ENCODE measurements at regions of chr5 and their contacts with region 1.

Region 1: GRCh38 chr5:103224118-103224893 is 34.3 kb upstream of the MACIR start:
- DNase-seq: no peak
- H3K4me3 ChIP-seq: peak overlapping the region; percentile 15
- H3K27me3 ChIP-seq: no peaks in the 10 kb centered on the region
- CTCF ChIP-seq: peak; percentile 78

Region 2: DNA sequence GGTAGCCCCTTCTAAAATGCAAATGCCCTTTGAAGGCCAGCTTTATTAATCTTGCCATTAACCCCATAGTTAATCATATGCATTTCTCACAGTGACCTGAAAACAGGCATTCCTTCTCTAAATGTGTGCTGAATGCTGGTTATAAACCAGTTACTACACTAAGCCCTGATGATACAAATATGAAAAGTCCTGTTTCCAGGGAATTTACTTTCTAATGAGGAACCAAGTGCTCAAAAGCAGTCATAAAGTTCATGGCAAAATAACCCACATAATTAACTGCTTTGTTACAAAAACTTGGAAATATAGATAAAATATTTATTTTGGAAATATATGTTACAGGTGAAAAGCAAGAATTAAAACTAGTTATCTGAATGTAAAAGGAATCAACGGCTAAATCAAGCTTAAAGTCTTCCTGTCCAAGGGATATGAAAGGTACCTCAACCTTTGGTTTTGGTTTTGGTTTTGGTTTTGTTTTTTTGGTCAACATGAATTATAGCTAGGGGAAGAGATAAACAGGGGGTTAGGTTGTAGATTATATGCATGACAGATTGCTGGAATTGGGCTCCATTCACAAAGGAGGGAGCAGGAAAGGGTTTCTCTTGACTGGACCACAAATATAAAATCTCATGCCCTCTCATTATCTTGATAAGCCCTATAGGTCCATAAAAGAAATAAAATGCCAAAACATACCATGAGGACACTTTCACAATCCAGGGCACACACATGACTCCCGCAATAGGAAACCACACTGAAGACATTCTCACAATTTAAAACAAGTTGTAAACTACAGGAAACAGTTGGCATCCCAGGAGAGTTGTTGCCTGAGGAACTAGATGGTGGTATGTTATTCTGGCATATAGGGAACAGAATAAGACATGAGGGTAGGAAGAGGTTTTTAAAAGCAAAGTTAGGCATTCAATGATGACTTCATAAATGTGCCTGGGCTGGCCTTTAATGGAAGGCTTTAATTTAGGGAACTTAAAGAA is 12.4 kb before region 1 on chr5:
- CTCF ChIA-PET with region 1: interaction called, 33 read pairs
- POLR2A ChIA-PET with region 1: no interaction called
- DNase-seq: no peak
- H3K4me3 ChIP-seq: no peak overlapping the region
- H3K27me3 ChIP-seq: no peaks in the 10 kb centered on the region
- CTCF ChIP-seq: no peak

Region 3: GRCh38 chr5:103249068-103249467 is 24.8 kb after region 1 on chr5:
- CTCF ChIA-PET with region 1: no interaction called
- POLR2A ChIA-PET with region 1: no interaction called
- DNase-seq: no peak
- H3K4me3 ChIP-seq: no peak overlapping the region
- H3K27me3 ChIP-seq: no peaks in the 10 kb centered on the region
- CTCF ChIP-seq: no peak